ENCODE measurements at regions of chr17 and their contacts with region 1.

Region 1: DNA sequence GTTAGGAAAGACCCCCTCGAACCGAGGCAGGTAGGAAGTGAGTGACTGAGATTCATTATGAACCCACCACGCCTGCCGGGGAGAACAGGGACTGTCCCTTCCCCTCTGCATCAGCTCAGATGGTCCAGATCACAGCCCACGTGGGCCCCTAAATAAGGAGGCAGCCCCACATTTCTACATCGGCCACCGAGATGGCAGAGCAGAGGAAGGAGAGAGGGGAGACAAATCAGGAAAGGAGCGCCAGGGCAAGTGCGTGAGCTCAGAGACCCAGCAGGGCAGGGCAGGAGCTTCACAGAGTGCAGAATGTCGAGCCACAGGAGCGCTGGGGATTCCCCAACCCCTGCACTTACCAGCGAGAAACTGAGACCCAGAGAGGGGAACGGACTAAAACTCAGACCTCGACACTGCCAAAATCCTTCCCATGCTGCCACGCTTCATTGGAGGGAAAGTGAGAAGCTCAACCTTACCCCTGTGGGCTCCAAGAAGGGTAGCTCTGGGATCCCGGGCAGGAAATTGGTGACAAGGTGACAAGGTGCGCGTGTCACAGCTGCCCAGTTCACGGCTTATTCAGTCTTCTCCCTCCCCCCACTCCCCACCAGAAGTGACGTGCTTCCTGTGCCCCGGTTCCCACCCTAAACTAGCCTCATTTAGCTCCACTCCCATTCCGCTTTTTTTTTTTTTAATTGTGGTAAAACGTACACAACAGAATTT is at the start of gene ICAM2:
- DNase-seq: no peak
- H3K4me3 ChIP-seq: peak within 1 kb of the TSS; percentile 21
- H3K27me3 ChIP-seq: no peaks in the 10 kb centered on the region
- CTCF ChIP-seq: no peak
- polyA plus RNA-seq, gene ICAM2: 0.91 and 1.6 TPM in 2 replicates

Region 2: DNA sequence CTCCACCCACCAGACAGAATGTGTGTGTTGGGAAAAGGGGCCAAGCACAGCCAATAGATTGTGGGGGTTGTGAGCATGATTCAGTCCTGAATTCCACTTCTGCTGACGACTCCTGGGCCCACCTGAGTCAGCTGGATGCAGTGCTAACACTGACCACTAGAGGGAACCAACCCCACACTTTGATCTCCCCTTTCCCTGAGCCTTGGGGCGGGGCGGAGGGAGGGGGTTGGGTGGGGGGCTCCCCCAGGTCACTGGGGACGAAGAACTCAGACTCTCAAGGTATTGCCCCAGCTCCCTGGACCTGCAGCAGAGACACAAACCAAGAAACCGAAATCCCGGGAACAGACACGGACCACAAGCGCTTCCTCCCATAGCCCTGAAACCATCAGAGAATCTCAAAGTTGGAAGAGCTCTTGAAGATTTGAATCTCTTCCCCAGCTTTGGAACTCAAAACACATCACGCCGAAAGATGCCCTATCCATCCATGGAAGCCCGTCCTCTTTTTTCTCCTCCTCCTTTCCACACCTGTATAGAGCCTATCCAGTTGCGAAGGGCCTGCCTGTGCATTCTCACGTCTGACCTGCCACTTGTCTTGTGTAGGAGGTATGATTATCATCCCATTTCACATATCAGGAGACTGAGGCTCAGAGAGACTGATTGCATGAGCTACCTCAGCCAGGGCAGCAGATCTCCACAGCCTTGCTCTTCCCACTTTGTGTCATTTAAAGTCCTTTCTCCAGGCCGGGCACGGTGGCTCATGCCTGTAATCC is 108.4 kb before region 1 on chr17:
- CTCF ChIA-PET with region 1: interaction called, 139 read pairs
- POLR2A ChIA-PET with region 1: no interaction called
- DNase-seq: no peak
- H3K4me3 ChIP-seq: no peak overlapping the region
- H3K27me3 ChIP-seq: peaks cover 10% of the 10 kb centered on the region
- CTCF ChIP-seq: peak; percentile 72